PC-3 (cell line): ENCODE measurements at regions of chr2 and their contacts with region 1.

Region 1: DNA sequence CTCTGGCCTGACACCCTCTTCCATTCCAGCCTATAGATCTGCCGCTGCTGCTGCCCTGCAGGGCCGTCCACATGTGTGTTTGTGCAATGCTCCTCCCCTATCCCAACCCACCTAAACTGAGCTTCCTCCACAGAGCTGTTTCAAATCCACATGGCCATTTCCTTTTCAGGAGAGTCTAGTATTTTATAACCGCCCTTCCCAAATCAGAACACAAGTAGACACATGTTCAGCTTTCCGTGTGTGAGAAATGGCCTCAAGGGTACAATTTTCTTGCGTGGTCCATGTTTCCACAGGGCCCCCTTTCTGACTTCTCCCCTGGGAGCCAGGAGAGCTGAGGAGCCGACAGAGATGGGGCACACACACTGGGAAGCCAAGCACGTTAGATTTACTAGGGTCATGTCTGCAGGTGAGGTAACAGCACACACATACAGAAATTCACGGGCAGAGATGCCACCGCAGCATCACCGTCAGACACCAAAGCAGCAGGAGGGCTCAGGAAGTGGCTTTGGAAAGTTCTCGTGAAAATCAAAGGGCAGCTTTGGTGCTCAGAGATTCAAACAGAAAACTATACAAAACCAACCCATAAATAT is 102.9 kb upstream of the TGFA start:
- DNase-seq: no peak
- ATAC-seq: no peak
- H3K4me3 ChIP-seq: no peak overlapping the region
- H3K27ac ChIP-seq: no peak overlapping the region
- H3K4me1 ChIP-seq: no peaks in the 10 kb centered on the region
- H3K27me3 ChIP-seq: peaks cover 59% of the 10 kb centered on the region
- CTCF ChIP-seq: no peak

Region 2: GRCh38 chr2:70627211-70627902 is 29.2 kb before region 1 on chr2:
- CTCF ChIA-PET with region 1: interaction called, 10 read pairs
- POLR2A ChIA-PET with region 1: no interaction called
- intact Hi-C with region 1: no loop called
- DNase-seq: peak; percentile 76
- ATAC-seq: peak; percentile 27; the same call in 1 of the 2 replicates
- H3K4me3 ChIP-seq: no peak overlapping the region
- H3K27ac ChIP-seq: no peak overlapping the region
- H3K4me1 ChIP-seq: peaks cover 11% of the 10 kb centered on the region
- H3K27me3 ChIP-seq: no peaks in the 10 kb centered on the region
- CTCF ChIP-seq: no peak

Region 3: DNA sequence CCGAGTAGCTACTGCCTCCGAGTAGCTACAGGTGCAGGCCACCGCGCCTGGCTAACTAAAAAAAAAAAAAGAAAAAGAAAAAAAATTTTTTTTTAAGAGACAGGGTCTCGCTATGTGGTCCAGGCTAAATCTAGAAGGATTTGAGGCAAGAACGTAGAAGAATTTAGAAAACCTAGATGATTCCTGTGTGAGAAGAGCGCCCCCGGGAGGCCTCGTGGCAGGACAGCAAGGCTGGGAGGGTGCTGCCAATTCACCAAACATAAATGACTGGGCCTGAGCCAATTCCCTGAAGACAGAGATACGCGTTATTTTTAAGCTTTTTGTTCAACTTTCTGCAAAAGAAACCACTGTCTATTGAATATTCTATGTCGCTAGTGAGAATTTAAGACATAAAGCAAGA is 12.8 kb before region 1 on chr2:
- CTCF ChIA-PET with region 1: no interaction called
- POLR2A ChIA-PET with region 1: no interaction called
- intact Hi-C with region 1: no loop called
- DNase-seq: peak; percentile 71
- ATAC-seq: no peak
- H3K4me3 ChIP-seq: no peak overlapping the region
- H3K27ac ChIP-seq: no peak overlapping the region
- H3K4me1 ChIP-seq: peaks cover 16% of the 10 kb centered on the region
- H3K27me3 ChIP-seq: no peaks in the 10 kb centered on the region
- CTCF ChIP-seq: peak; percentile 78

Region 4: GRCh38 chr2:70789304-70790135 is 133.0 kb after region 1 on chr2:
- CTCF ChIA-PET with region 1: no interaction called
- POLR2A ChIA-PET with region 1: no interaction called
- intact Hi-C with region 1: loop called (anchors 1 kb)
- DNase-seq: peak; percentile 73
- ATAC-seq: peak; percentile 90
- H3K4me3 ChIP-seq: peak overlapping the region; percentile 29
- H3K27ac ChIP-seq: no peak overlapping the region
- H3K4me1 ChIP-seq: no peaks in the 10 kb centered on the region
- H3K27me3 ChIP-seq: peaks cover 58% of the 10 kb centered on the region
- CTCF ChIP-seq: peak; percentile 84